Activated T-helper 2 cell treated with anti-CD3 and anti-CD28 coated beads, Interferon-gamma antibody, Interleukin-2, Interleukin-4, amounts not matched to agents 10 μg/mL and 5 μg/mL and 100 μg/mL, durations not matched to agents 14 hours and 24 hours and 36 hours (primary cell): ENCODE measurements at regions of chr6 and their contacts with region 1.

Region 1: GRCh38 chr6:137866914-137867684 is at the start of gene TNFAIP3:
- DNase-seq: peak; percentile 94
- H3K4me3 Mint-ChIP-seq: peak within 1 kb of the TSS; percentile 96
- H3K27ac Mint-ChIP-seq: peak within 1 kb of the TSS; percentile 96
- H3K4me1 Mint-ChIP-seq: peaks cover 38% of the 10 kb centered on the region
- H3K27me3 Mint-ChIP-seq: no peaks in the 10 kb centered on the region
- total RNA-seq, gene TNFAIP3: 250 and 251 TPM in 2 replicates

Region 2: DNA sequence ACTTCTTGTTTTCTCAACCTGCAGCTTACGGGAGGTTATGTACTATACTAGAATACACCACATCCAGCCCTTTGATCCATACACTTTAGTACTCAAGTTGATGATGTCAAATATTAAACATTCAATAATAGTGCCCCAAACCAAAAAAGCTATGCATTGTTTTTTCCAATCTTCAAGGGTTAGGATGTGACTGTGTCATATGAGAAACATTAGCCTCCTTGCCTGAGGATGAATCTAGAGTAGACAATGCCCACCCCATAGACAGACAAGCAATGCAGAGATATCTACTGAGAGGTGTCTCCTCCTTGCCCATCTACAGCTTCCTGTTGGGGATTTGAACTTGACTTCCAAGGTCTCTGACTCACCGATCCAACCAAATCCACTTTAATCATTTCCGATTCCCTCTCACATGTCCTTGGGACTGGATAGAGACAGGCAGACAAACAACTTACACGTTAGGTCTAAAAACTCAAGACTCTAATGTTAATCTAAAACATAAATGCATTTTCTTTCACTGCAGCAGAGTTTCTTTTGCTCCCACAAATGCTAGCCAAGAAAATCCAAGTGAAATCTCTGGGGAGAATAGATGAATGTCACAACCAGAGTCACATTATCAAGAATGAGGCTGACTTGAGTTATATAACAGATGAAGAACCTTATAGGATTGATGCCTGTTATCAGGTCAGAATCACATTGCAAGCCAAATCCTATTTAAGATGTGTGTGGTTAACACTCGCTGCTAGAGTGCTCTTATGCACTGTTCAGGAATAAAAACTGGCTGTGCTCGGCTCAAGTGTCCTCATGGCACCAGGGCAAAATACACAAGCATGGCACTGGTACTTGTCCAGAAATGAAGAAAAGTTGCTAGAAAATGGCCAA is 75.6 kb before region 1 on chr6:
- intact Hi-C with region 1: loop called (anchors 1 kb)
- DNase-seq: no peak
- H3K4me3 Mint-ChIP-seq: peak overlapping the region; percentile 37
- H3K27ac Mint-ChIP-seq: peak overlapping the region; percentile 81
- H3K4me1 Mint-ChIP-seq: peaks cover 61% of the 10 kb centered on the region
- H3K27me3 Mint-ChIP-seq: no peaks in the 10 kb centered on the region

Region 3: DNA sequence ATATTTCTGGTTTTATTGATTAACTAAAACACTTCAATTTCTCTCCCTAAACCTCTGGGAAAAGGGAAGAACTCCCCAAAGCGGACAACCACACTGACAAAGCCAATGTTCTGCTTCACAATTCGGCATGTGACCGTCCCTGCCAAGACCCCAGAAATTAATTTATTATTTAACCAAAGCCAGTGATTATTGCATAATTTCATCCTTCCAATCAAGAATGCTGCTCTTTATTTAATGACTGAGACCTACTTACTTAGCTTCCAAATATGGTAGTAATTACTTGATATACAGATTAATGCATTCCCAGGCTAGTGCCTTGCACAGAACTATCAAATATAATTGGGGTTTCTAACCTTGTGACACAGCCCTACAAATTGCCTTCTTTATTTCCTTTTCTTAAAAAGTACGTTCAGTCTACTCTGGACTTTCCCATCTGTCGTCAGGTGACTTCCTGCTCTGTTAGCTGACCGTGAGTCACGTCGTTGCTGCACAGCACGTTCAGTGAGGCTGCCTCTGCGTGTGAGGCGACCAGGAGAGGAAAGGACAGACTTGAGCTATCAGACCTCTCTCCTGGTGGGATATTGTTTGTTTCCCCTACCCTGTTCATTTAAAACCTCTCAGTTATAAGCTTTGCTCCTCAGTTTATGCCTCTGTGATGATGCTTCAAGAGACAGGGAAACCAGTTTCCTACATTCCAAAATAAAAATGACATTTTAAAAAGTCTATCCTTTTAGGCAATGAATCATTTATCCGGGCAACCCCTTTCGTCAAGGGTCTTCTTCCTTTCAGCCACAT is 55.8 kb before region 1 on chr6:
- intact Hi-C with region 1: loop called (anchors 1 kb)
- DNase-seq: peak; percentile 69
- H3K4me3 Mint-ChIP-seq: peak overlapping the region; percentile 7
- H3K27ac Mint-ChIP-seq: peak overlapping the region; percentile 90
- H3K4me1 Mint-ChIP-seq: peaks cover 59% of the 10 kb centered on the region
- H3K27me3 Mint-ChIP-seq: no peaks in the 10 kb centered on the region

Region 4: DNA sequence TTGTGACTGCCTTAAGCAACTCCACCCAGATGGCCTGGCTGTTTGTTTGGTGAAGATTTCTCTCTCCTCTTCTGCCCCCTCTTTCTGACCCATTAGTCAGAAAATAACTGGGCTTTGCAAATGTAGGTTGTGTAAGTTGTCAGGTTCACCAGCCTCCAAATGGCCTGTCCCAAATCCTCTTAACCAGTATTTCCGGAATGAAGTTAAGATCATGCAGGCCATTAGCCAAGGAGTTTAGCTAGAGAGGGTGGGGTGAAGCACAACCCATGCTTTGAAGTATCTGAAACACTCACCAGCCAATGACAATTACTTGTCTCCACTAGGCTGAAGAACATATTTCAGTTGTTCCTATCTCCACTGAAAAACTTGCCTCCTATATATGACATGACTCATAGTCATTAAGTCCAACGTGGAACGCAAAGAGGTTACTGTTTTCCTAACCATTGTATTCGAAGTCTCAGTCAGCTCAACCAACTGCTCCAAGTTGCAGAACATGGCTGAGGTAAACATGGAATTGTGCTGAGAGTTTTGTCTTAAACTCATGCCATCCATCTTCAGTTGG is 37.5 kb before region 1 on chr6:
- intact Hi-C with region 1: loop called (anchors 1 kb)
- DNase-seq: no peak
- H3K4me3 Mint-ChIP-seq: no peak overlapping the region
- H3K27ac Mint-ChIP-seq: peak overlapping the region; percentile 98
- H3K4me1 Mint-ChIP-seq: peaks cover 66% of the 10 kb centered on the region
- H3K27me3 Mint-ChIP-seq: no peaks in the 10 kb centered on the region

Region 5: GRCh38 chr6:137944793-137945498 is 77.8 kb after region 1 on chr6:
- intact Hi-C with region 1: loop called (anchors 1 kb)
- DNase-seq: no peak
- H3K4me3 Mint-ChIP-seq: no peak overlapping the region
- H3K27ac Mint-ChIP-seq: peak overlapping the region; percentile 69
- H3K4me1 Mint-ChIP-seq: peaks cover 57% of the 10 kb centered on the region
- H3K27me3 Mint-ChIP-seq: no peaks in the 10 kb centered on the region

Region 6: GRCh38 chr6:138001750-138002349 is 134.8 kb after region 1 on chr6:
- intact Hi-C with region 1: loop called (anchors 1 kb)
- DNase-seq: peak; percentile 31
- H3K4me3 Mint-ChIP-seq: no peak overlapping the region
- H3K27ac Mint-ChIP-seq: no peak overlapping the region
- H3K4me1 Mint-ChIP-seq: peaks cover 15% of the 10 kb centered on the region
- H3K27me3 Mint-ChIP-seq: peaks cover 17% of the 10 kb centered on the region